ENCODE measurements at regions of chr4 and their contacts with region 1.

Region 1: GRCh38 chr4:140861359-140862176 is 105.4 kb upstream of the TBC1D9 start:
- DNase-seq: peak; percentile 74 to 88 (median 78)
- ATAC-seq: peak; percentile 68
- H3K4me3 ChIP-seq: no peak overlapping the region
- H3K27ac ChIP-seq: no peak overlapping the region
- H3K4me1 ChIP-seq: no peaks in the 10 kb centered on the region
- H3K27me3 ChIP-seq: no peaks in the 10 kb centered on the region
- CTCF ChIP-seq: peak; percentile 41 to 93 (median 83)
- POLR2A ChIP-seq: peak in 1 of 3 donors; percentile 5

Region 2: DNA sequence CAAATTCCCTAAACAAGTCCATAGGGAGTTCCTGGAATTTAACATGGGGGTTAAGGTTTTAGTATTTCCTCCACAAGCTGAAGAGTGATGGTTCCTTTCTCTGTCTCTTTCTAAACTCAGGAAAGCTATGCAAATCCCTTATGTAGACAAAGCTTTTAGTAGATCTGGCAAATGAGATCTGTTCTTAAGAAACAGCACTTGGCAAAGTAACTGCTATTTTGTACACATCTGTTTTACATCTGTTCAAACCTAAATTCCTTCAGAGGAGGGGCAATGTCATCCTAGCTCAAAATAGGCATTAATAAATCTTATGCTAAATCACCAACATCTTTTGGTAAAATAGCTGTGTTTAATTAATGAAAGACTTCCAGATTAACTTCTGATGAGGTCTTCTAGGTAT is 32.4 kb after region 1 on chr4:
- intact Hi-C with region 1: no loop called
- DNase-seq: no peak
- ATAC-seq: no peak
- H3K4me3 ChIP-seq: no peak overlapping the region
- H3K27ac ChIP-seq: no peak overlapping the region
- H3K4me1 ChIP-seq: no peaks in the 10 kb centered on the region
- H3K27me3 ChIP-seq: no peaks in the 10 kb centered on the region
- CTCF ChIP-seq: no peak
- POLR2A ChIP-seq: no peak

Region 3: DNA sequence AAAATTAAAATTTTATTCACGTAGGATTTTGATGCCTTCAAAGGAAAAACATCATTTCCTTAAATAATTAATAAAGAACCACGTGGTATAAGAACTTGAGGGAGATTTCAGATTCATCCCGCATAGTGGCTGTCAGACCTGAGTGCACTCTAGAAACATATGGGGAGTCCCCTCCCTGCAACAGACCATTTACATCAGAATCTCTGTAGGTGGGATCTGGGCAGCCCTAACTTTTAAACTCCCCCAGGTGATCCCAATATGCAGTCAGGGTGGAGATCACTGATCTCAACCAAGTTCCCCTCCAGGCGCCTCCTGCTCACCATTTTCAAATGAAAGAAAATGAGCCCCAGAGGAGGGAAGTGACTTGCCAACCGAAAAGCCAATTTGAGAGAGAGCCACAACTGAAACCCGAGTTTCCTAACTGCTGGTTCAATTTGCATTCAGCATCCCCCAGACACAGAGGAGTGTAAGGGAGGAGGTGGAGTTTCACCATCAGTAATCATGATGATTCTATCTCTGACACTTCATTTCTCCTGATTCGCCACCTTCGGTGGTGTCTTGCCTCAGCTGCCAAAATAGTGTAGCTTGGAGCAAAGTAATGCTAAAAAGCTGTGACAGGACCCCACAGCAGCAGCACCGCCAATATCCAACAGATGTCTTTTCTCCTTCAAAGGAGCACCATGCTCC is 260.3 kb after region 1 on chr4:
- intact Hi-C with region 1: loop called (anchors 5 kb)
- DNase-seq: no peak
- ATAC-seq: no peak
- H3K4me3 ChIP-seq: no peak overlapping the region
- H3K27ac ChIP-seq: no peak overlapping the region
- H3K4me1 ChIP-seq: no peaks in the 10 kb centered on the region
- H3K27me3 ChIP-seq: no peaks in the 10 kb centered on the region
- CTCF ChIP-seq: no peak
- POLR2A ChIP-seq: no peak

Region 4: GRCh38 chr4:141133146-141133998 is 271.8 kb after region 1 on chr4 and contains the start of gene RNF150:
- intact Hi-C with region 1: loop called (anchors 5 kb)
- DNase-seq: peak; percentile 73 to 82 (median 78)
- ATAC-seq: peak; percentile 83
- H3K4me3 ChIP-seq: peak within 1 kb of the TSS; percentile 42 to 95
- H3K27ac ChIP-seq: peak within 1 kb of the TSS in 3 of 4 donors; percentile 2 to 59 (median 47)
- H3K4me1 ChIP-seq: peaks cover 6% of the 10 kb centered on the region
- H3K27me3 ChIP-seq: no peaks in the 10 kb centered on the region
- CTCF ChIP-seq: peak; percentile 45 to 97 (median 69)
- POLR2A ChIP-seq: peak in 1 of 3 donors; percentile 6
- total RNA-seq, gene RNF150: 2.3 to 4.6 TPM

Region 5: DNA sequence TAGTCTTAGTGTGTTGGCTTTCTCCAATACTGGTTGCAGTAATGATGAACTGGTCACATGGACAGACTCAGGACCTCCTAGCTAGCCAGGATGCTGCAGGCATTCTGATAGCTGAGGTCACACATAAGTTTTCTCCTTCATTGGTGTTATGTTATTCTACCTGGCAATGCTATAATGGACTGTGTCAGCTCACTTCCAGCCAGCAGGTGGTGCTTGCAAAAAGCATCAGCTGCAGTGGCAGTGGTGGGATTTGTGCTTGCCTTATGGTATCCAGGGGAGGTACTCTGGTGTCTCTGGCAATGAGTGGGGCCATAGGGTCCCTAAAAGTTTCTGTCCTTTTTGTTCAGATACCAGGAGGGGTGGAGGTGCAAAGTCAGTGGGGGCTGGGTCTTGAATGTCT is 392.8 kb after region 1 on chr4:
- intact Hi-C with region 1: no loop called
- DNase-seq: no peak
- ATAC-seq: no peak
- H3K4me3 ChIP-seq: no peak overlapping the region
- H3K27ac ChIP-seq: no peak overlapping the region
- H3K4me1 ChIP-seq: peaks cover 4% of the 10 kb centered on the region
- H3K27me3 ChIP-seq: no peaks in the 10 kb centered on the region
- CTCF ChIP-seq: no peak
- POLR2A ChIP-seq: no peak

Measured in body of pancreas (tissue), 4 donors.